B cell (primary cell): ENCODE measurements at regions of chr4 and their contacts with region 1.

Region 1: DNA sequence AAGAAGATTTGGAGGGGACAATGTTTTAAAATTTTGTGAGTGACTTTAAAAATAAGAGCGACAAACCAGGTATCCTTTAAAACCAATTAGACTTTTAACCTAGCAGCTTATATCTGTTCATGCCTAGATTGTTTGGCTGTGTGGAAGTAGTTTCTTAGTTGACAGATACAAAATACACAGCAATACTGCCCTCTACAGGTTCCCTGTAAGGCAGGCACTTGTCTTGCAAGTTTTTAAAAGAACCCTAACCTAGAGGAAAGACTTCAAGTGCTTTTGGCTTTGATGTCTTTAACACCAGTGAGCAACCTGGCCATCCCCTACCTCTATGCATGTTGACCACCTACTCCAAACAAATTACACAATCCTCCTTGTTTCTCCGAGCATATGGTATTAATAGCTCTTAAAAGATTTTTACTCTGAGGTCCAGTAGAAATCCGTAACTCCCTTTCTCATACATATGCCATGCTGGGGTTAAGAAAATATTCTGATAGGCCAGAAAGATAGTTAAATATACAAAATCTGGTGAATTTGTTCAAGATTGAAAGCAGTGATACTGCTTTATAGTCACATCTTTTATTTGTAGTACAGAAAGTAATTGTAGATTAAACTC is 273.0 kb downstream of the ARHGAP24 start:
- DNase-seq: peak; percentile 85
- ATAC-seq: peak; percentile 78
- H3K4me3 ChIP-seq: no peak overlapping the region
- H3K4me3 Mint-ChIP-seq: no peak overlapping the region
- H3K27ac ChIP-seq: no peak overlapping the region
- H3K27ac Mint-ChIP-seq: peak overlapping the region; percentile 47
- H3K4me1 ChIP-seq: peaks cover 50 to 63% of the 10 kb centered on the region in 2 donors
- H3K4me1 Mint-ChIP-seq: peaks cover 56% of the 10 kb centered on the region
- H3K27me3 ChIP-seq: no peaks in the 10 kb centered on the region
- H3K27me3 Mint-ChIP-seq: no peaks in the 10 kb centered on the region
- CTCF ChIP-seq: peak; percentile 92

Region 2: GRCh38 chr4:85370430-85371032 is 377.5 kb before region 1 on chr4:
- CTCF ChIA-PET with region 1: interaction called, 8 read pairs
- POLR2A ChIA-PET with region 1: no interaction called
- intact Hi-C with region 1: loop called (anchors 1 kb)
- DNase-seq: peak; percentile 75
- ATAC-seq: peak; percentile 82
- H3K4me3 ChIP-seq: no peak overlapping the region
- H3K4me3 Mint-ChIP-seq: peak overlapping the region; percentile 52
- H3K27ac ChIP-seq: peak overlapping the region; percentile 31 to 39
- H3K27ac Mint-ChIP-seq: peak overlapping the region; percentile 77
- H3K4me1 ChIP-seq: peaks cover 24 to 26% of the 10 kb centered on the region in 2 donors
- H3K4me1 Mint-ChIP-seq: peaks cover 28% of the 10 kb centered on the region
- H3K27me3 ChIP-seq: no peaks in the 10 kb centered on the region
- H3K27me3 Mint-ChIP-seq: no peaks in the 10 kb centered on the region
- CTCF ChIP-seq: peak; percentile 78

Region 3: DNA sequence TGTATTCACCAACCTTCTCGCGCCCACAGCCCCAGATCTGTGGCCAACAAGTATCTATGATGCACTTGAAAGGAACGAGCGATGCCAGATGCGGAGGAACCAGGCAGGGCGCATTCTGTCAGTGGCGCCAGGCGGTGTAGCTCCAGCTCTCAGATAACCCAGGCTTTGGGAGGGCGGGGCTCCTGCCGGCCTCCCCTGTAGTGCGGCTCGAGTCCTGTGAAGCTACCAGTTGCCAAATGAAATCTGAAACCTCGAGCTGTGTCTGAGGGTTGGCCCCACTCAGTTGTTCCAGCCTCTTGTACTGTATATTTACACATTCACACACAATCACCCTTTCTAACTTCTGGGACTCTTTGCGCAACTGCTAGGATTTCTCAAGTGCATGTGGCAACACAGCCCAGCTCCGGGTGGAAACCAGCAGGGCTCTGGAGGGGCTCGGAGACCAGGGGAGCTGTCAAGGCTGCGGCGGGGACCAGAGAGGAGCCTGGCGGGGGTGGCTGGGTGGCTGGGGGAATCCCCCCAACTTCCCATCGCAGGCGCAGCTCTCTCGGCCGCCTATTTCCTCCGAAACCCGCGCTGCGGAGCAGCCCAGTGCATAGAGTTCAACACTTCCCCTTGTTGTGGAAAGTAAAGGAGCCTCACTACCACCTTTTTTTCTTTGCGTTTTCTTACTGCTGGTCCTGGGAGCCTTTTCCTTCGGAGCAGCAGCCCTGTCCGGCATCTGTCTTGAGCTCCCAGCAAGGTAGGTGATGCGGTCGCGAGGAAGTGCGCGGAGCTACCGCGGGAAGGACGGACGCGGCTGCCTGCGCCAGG is 273.0 kb before region 1 on chr4 and contains the start of gene ARHGAP24:
- CTCF ChIA-PET with region 1: interaction called, 30 read pairs
- POLR2A ChIA-PET with region 1: no interaction called
- intact Hi-C with region 1: loop called (anchors 2 kb)
- DNase-seq: peak; percentile 91
- ATAC-seq: peak; percentile 83
- H3K4me3 ChIP-seq: peak within 1 kb of the TSS; percentile 62 to 86 (median 72)
- H3K4me3 Mint-ChIP-seq: peak within 1 kb of the TSS; percentile 98
- H3K27ac ChIP-seq: peak within 1 kb of the TSS; percentile 91
- H3K27ac Mint-ChIP-seq: peak within 1 kb of the TSS; percentile 99
- H3K4me1 ChIP-seq: peaks cover 34 to 37% of the 10 kb centered on the region in 2 donors
- H3K4me1 Mint-ChIP-seq: peaks cover 51% of the 10 kb centered on the region
- H3K27me3 ChIP-seq: no peaks in the 10 kb centered on the region
- H3K27me3 Mint-ChIP-seq: no peaks in the 10 kb centered on the region
- CTCF ChIP-seq: no peak
- total RNA-seq, gene ARHGAP24: 141 and 156 TPM in 2 replicates

Region 4: DNA sequence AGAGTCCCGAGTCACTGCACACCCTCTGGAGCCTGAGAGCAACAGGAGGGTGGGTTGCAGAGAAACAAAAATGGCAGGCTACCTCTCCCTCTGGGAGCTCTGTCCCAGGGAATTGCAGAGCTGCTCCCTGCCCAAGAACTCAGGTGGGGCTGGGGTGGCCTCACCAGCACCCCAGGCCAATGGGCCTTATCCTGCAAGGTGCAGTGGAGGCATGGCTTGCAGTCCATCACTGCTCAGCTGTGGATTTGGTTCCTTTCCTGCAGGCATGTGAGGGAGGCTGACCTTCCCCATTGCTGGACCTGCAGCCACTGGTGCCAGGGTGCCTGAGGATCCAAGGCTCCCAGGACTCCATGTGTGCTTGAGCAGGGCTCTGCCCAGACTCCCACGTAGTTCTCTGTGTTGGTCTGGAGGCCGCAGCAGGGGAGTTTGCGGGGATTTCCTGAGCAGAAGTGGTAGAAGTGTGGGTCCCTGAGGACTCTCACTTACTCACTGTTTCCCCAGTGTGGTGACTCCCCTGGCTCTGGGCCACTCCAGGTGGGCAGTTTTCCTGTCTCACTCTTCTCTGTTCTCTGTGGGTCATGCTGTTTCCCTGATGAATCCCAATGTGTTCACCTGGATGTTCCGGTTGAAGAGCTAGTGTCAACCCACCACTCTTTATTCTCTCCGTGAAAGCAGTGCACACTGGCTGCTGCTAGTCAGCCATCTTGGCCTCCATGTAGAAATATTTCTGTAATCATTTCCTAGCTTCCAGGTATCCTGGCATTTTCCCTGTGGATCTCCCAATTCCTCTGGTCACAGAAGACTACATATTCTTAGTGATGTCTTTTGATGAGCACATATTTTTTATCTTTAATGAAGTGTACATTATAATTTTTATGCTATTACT is 190.7 kb before region 1 on chr4:
- CTCF ChIA-PET with region 1: interaction called, 29 read pairs
- POLR2A ChIA-PET with region 1: no interaction called
- intact Hi-C with region 1: loop called (anchors 2 kb)
- DNase-seq: peak; percentile 93
- ATAC-seq: peak; percentile 86
- H3K4me3 ChIP-seq: peak overlapping the region in 2 of 5 experiments; percentile 12 to 14
- H3K4me3 Mint-ChIP-seq: peak overlapping the region; percentile 66
- H3K27ac ChIP-seq: peak overlapping the region; percentile 92 to 95
- H3K27ac Mint-ChIP-seq: peak overlapping the region; percentile 96
- H3K4me1 ChIP-seq: peaks cover 61 to 62% of the 10 kb centered on the region in 2 donors
- H3K4me1 Mint-ChIP-seq: peaks cover 72% of the 10 kb centered on the region
- H3K27me3 ChIP-seq: no peaks in the 10 kb centered on the region
- H3K27me3 Mint-ChIP-seq: no peaks in the 10 kb centered on the region
- CTCF ChIP-seq: no peak

Region 5: DNA sequence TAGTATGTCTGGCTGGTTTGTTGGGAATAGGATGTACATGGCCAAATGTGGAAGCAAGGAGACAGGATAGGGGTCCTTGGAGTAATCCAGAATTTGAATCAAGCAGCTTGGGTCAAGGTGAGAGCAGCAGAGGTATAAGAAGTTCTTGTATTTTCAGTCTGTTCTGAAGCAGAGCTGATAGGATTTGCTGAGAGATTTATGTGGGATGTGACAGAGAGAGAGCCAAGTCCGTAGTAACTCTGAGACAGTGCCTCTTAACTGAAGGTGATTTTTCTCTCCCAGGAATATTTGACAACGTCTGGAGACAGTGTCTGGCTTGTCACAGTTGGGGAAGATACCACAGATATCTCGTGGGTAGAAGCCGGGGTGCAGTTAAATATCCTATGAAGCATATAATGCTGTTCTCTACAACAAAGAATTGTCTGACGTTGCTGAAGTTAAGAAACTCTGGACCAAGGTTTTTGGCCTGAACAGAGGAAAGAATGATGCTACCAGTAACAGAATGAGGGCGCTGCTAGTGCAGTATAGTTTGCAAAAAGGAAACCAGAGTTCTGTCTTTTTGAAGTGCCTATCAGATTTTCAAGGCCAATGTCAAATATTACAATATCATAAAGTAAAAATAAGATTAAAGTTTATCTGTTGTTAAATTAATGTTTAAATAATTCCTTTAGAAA is 89.1 kb before region 1 on chr4:
- CTCF ChIA-PET with region 1: interaction called, 27 read pairs
- POLR2A ChIA-PET with region 1: no interaction called
- intact Hi-C with region 1: loop called (anchors 2 kb)
- DNase-seq: peak; percentile 50
- ATAC-seq: peak; percentile 23
- H3K4me3 ChIP-seq: no peak overlapping the region
- H3K4me3 Mint-ChIP-seq: peak overlapping the region; percentile 59
- H3K27ac ChIP-seq: peak overlapping the region; percentile 62 to 81
- H3K27ac Mint-ChIP-seq: peak overlapping the region; percentile 86
- H3K4me1 ChIP-seq: peaks cover 38 to 46% of the 10 kb centered on the region in 2 donors
- H3K4me1 Mint-ChIP-seq: peaks cover 45% of the 10 kb centered on the region
- H3K27me3 ChIP-seq: no peaks in the 10 kb centered on the region
- H3K27me3 Mint-ChIP-seq: no peaks in the 10 kb centered on the region
- CTCF ChIP-seq: peak; percentile 16

Region 6: DNA sequence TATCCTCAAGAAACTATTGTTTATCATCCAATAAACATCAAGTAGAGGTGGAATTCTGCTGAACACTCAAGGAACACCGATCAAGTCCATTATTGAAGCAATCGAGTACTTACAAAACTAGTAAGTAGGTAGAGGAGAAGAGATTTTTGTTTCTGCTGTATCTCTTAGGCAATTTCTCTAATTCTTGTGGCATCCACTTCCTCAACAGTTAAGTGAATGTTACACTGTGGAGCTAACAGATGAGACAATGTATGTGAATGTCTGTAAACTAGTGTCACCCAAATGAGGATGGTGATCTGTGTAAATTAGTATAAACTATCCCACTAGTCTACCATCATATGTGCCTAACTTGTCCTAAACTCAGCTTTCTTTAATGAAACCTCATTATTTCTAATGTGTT is 11.4 kb before region 1 on chr4:
- CTCF ChIA-PET with region 1: interaction called, 28 read pairs
- POLR2A ChIA-PET with region 1: no interaction called
- intact Hi-C with region 1: no loop called
- DNase-seq: no peak
- ATAC-seq: no peak
- H3K4me3 ChIP-seq: no peak overlapping the region
- H3K4me3 Mint-ChIP-seq: no peak overlapping the region
- H3K27ac ChIP-seq: peak overlapping the region in 1 of 2 donors; percentile 5
- H3K27ac Mint-ChIP-seq: peak overlapping the region; percentile 17
- H3K4me1 ChIP-seq: peaks cover 63 to 70% of the 10 kb centered on the region in 2 donors
- H3K4me1 Mint-ChIP-seq: peaks cover 72% of the 10 kb centered on the region
- H3K27me3 ChIP-seq: no peaks in the 10 kb centered on the region
- H3K27me3 Mint-ChIP-seq: no peaks in the 10 kb centered on the region
- CTCF ChIP-seq: no peak

Region 7: DNA sequence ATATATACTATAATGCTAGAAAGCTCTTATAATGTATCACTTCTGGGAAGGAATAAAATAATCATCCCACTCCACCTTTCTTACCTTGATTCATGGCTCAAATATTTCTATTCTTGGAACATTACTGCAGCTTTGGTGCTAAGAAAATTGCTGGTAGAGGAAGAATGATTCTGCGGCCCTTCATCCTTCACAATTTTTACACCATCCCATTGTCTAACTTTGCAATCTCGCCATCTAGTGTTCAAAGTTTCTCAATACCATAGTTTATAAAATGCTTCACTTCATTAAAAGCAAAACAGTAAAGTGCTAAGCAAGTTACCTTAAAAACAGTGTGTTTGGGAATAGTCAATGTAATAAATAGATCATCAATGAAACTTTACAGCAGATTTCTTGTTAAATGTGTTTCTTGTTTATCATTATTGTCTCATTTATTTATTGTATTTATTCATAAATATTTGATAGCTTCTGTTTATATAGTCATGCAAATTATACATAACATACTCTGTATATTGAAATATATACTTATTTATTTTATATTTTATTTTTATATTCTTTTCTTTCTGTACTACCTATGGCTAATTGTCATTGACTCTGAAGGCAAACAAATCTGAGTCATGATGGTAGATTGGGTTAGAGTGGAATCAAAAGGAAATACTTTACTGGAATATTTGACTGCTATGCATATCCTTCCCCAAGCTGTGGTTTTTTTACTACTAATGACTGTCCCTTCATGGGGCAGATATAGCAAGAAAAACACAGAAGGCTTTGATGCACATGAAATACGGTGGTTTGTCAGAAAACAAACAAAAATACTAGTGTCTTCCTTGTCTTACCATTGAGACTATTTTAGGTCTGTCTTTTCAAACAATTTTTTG is 221.2 kb after region 1 on chr4:
- CTCF ChIA-PET with region 1: interaction called, 8 read pairs
- POLR2A ChIA-PET with region 1: no interaction called
- intact Hi-C with region 1: loop called (anchors 2 kb)
- DNase-seq: peak; percentile 66
- ATAC-seq: peak; percentile 28
- H3K4me3 ChIP-seq: no peak overlapping the region
- H3K4me3 Mint-ChIP-seq: no peak overlapping the region
- H3K27ac ChIP-seq: no peak overlapping the region
- H3K27ac Mint-ChIP-seq: no peak overlapping the region
- H3K4me1 ChIP-seq: peaks cover 0 to 6% of the 10 kb centered on the region in 2 donors
- H3K4me1 Mint-ChIP-seq: peaks cover 15% of the 10 kb centered on the region
- H3K27me3 ChIP-seq: no peaks in the 10 kb centered on the region
- H3K27me3 Mint-ChIP-seq: no peaks in the 10 kb centered on the region
- CTCF ChIP-seq: peak; percentile 75